ENCODE measurements at regions of chrX and their contacts with region 1.

Region 1: GRCh38 chrX:16826207-16826606 is 39.9 kb downstream of the TXLNG start:
- DNase-seq: peak; percentile 56
- H3K4me3 Mint-ChIP-seq: no peak overlapping the region
- H3K27ac Mint-ChIP-seq: no peak overlapping the region
- H3K4me1 Mint-ChIP-seq: peaks cover 15% of the 10 kb centered on the region
- H3K27me3 Mint-ChIP-seq: no peaks in the 10 kb centered on the region
- CTCF ChIP-seq: peak; percentile 60

Region 2: DNA sequence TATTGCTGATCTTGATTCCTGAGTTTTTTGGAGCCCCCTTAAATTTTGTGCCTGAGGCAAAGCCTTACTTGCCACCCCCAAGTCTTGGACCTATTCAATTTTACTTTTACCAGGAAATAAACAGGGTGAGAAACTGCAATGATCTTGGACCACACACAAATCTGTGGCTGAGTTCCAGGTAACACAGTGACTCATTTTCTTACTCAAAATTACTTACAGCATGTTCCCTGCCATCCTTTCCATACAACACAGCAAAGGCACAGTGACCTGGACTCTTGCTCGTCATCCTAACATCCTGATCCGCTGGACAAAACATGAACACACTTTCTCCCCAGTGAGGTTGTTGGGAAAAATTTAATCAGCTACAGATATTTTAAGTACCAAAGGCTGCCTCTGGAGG is 237.0 kb before region 1 on chrX:
- CTCF ChIA-PET with region 1: no interaction called
- POLR2A ChIA-PET with region 1: no interaction called
- intact Hi-C with region 1: no loop called
- DNase-seq: peak; percentile 85
- H3K4me3 Mint-ChIP-seq: no peak overlapping the region
- H3K27ac Mint-ChIP-seq: no peak overlapping the region
- H3K4me1 Mint-ChIP-seq: peaks cover 11% of the 10 kb centered on the region
- H3K27me3 Mint-ChIP-seq: peaks cover 9% of the 10 kb centered on the region
- CTCF ChIP-seq: no peak

Region 3: DNA sequence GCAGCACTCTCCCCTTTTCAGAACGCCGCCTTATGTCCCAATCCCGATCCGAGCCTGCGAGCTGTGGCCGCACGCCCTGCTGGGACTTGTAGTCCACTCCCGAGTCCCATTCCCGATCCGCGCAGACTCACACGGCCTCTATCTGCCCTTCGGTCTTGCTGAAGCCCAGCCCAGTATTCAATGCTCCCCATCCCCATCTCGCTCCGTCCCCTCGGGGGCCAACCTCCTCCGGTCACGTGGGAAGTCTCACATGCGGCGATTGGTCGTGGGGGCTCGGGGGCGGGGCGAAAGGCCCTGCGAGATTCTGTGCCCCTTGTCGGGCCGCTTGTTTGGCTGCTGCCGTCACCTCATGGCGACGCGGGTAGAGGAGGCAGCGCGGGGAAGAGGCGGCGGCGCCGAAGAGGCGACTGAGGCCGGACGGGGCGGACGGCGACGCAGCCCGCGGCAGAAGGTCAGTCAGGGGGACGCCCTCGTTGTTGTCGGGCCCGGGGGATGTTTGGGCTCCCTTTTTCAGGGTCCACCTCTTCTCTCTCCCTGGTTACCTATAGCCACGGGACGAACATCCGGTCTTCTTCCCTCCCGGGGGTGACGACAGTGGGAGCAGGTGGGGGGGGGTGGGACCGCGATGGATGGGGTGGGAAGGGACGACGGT is 39.9 kb before region 1 on chrX and contains the start of gene TXLNG:
- CTCF ChIA-PET with region 1: no interaction called
- POLR2A ChIA-PET with region 1: interaction called, 16 read pairs
- intact Hi-C with region 1: no loop called
- DNase-seq: peak; percentile 100
- H3K4me3 Mint-ChIP-seq: peak within 1 kb of the TSS; percentile 89
- H3K27ac Mint-ChIP-seq: peak within 1 kb of the TSS; percentile 75
- H3K4me1 Mint-ChIP-seq: no peaks in the 10 kb centered on the region
- H3K27me3 Mint-ChIP-seq: no peaks in the 10 kb centered on the region
- CTCF ChIP-seq: no peak
- total RNA-seq, gene TXLNG: 32.4 and 43.2 TPM in 2 replicates

Region 4: DNA sequence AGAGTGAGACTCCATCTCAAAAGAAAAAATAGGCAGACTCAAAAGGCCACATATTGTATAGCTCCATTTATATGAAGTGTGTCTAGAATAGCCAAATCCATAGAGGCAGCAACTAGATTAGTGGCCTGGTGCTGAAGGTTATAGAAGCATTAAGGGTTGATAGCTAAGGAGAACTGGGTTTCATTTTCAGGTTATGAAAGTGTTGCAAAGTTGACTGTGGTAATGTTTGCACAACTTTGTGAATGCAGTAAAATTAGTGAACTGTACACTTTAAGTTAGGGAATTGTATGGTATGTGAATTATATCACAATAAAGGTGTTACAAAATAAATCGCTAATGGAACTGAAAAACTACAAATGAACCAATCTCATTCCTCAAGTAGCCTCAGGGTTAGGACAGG is 11.6 kb before region 1 on chrX:
- CTCF ChIA-PET with region 1: interaction called, 10 read pairs
- POLR2A ChIA-PET with region 1: interaction called, 3 read pairs
- intact Hi-C with region 1: no loop called
- DNase-seq: no peak
- H3K4me3 Mint-ChIP-seq: no peak overlapping the region
- H3K27ac Mint-ChIP-seq: no peak overlapping the region
- H3K4me1 Mint-ChIP-seq: no peaks in the 10 kb centered on the region
- H3K27me3 Mint-ChIP-seq: no peaks in the 10 kb centered on the region
- CTCF ChIP-seq: no peak

Region 5: GRCh38 chrX:16870095-16870860 is 44.1 kb after region 1 on chrX and contains the start of gene RBBP7:
- CTCF ChIA-PET with region 1: interaction called, 5 read pairs
- POLR2A ChIA-PET with region 1: interaction called, 27 read pairs
- intact Hi-C with region 1: no loop called
- DNase-seq: peak; percentile 94
- H3K4me3 Mint-ChIP-seq: peak within 1 kb of the TSS; percentile 98
- H3K27ac Mint-ChIP-seq: peak within 1 kb of the TSS; percentile 90
- H3K4me1 Mint-ChIP-seq: peaks cover 15% of the 10 kb centered on the region
- H3K27me3 Mint-ChIP-seq: peaks cover 30% of the 10 kb centered on the region
- CTCF ChIP-seq: no peak
- total RNA-seq, gene RBBP7: 81.9 and 95.2 TPM in 2 replicates

Region 6: DNA sequence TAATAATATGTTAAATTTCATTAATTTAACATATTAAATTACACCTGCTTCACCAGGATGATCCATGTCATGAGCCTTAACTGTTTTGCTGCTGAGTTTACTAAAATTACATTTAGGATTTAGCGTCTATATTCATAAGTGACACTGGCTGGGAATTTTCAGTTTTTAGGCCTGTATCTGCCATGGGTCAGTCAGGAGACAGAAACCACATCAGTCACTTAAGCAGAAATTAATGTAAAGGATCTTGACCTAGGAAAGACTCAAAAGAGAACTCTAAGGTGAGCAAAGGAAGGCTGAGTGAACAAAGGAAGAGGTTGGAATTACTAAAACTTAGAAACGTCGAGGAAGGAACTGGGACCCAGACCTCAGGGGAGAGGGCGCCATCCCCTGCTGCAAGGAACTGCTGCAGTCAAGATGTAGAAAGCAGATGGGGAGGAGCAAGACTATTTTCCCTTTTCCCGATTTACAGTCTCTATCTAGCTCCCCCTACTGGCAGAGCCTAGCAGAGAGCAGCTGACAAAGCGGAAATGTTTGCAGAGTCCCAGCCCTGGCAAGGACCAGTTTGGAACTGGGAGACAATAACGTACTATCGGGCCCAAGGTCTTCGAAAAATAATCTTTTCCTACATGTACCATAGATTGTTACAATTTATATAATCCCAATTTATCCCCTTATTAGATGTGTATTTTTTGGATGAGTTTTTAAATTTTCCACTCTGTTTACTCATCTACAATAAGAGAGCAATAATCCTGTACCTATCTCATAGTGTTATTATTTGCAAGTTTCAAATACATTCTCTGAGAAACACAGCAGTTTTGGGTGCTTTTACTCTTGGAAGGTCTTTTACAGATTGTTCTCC is 66.5 kb after region 1 on chrX:
- CTCF ChIA-PET with region 1: interaction called, 6 read pairs
- POLR2A ChIA-PET with region 1: no interaction called
- intact Hi-C with region 1: loop called (anchors 1 kb)
- DNase-seq: peak; percentile 88
- H3K4me3 Mint-ChIP-seq: no peak overlapping the region
- H3K27ac Mint-ChIP-seq: no peak overlapping the region
- H3K4me1 Mint-ChIP-seq: peaks cover 6% of the 10 kb centered on the region
- H3K27me3 Mint-ChIP-seq: peaks cover 67% of the 10 kb centered on the region
- CTCF ChIP-seq: peak; percentile 86

Region 7: DNA sequence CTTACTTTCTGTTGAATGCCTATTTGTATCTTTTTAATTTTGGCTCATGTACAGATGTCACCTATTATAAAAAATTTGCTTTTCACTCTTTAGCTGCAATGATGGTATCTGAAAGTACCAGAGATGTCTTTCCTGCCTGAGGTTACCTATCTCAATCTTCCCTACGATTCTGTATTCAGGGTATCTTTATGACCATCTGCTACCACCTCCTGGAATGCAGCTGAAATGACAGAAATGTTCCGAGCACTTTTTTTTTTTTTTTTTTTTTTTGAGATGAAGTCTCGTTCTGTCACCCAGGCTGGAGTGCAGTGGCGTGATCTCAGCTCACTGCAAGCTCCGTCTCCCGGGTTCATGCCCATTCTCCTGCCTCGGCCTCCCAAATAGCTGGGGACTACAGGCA is 256.6 kb after region 1 on chrX:
- CTCF ChIA-PET with region 1: interaction called, 7 read pairs
- POLR2A ChIA-PET with region 1: interaction called, 3 read pairs
- intact Hi-C with region 1: loop called (anchors 10 kb)
- DNase-seq: peak; percentile 47
- H3K4me3 Mint-ChIP-seq: no peak overlapping the region
- H3K27ac Mint-ChIP-seq: no peak overlapping the region
- H3K4me1 Mint-ChIP-seq: no peaks in the 10 kb centered on the region
- H3K27me3 Mint-ChIP-seq: peaks cover 87% of the 10 kb centered on the region
- CTCF ChIP-seq: no peak